AG04450 (cell line): ENCODE measurements at regions of chr4 and their contacts with region 1.

Region 1: GRCh38 chr4:121462660-121463261 is 81.9 kb upstream of the QRFPR start:
- DNase-seq: peak; percentile 24
- H3K4me3 ChIP-seq: no peak overlapping the region
- H3K27ac ChIP-seq: no peak overlapping the region
- H3K27me3 ChIP-seq: no peaks in the 10 kb centered on the region
- CTCF ChIP-seq: peak; percentile 80

Region 2: DNA sequence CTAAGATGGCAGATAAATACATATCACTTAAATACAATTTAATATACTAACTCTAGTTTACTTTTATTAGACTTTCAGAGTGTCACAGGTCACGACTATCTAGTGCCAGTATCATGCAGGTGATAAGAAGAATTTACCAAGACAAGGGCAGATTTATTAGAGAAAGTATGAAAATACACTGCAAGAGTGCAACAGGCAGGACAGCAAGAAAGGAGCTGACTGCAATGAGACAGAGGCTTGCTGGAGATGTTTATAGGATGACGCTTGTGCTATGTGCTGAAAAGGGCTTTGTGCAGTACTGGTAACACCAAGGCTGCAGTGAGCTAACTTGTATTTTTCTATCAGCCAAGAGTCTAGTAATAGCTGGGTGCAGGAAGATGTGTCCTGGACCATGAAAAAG is 14.7 kb after region 1 on chr4:
- CTCF ChIA-PET with region 1: interaction called, 10 read pairs
- POLR2A ChIA-PET with region 1: no interaction called
- DNase-seq: no peak
- H3K4me3 ChIP-seq: no peak overlapping the region
- H3K27ac ChIP-seq: no peak overlapping the region
- H3K27me3 ChIP-seq: no peaks in the 10 kb centered on the region
- CTCF ChIP-seq: no peak

Region 3: GRCh38 chr4:121554382-121554781 is 91.6 kb after region 1 on chr4:
- CTCF ChIA-PET with region 1: no interaction called
- POLR2A ChIA-PET with region 1: no interaction called
- DNase-seq: no peak
- H3K4me3 ChIP-seq: no peak overlapping the region
- H3K27ac ChIP-seq: no peak overlapping the region
- H3K27me3 ChIP-seq: no peaks in the 10 kb centered on the region
- CTCF ChIP-seq: no peak